Activated naive CD4-positive, alpha-beta T cell treated with anti-CD3 and anti-CD28 coated beads for 36 hours (primary cell): ENCODE measurements at regions of chr1 and their contacts with region 1.

Region 1: DNA sequence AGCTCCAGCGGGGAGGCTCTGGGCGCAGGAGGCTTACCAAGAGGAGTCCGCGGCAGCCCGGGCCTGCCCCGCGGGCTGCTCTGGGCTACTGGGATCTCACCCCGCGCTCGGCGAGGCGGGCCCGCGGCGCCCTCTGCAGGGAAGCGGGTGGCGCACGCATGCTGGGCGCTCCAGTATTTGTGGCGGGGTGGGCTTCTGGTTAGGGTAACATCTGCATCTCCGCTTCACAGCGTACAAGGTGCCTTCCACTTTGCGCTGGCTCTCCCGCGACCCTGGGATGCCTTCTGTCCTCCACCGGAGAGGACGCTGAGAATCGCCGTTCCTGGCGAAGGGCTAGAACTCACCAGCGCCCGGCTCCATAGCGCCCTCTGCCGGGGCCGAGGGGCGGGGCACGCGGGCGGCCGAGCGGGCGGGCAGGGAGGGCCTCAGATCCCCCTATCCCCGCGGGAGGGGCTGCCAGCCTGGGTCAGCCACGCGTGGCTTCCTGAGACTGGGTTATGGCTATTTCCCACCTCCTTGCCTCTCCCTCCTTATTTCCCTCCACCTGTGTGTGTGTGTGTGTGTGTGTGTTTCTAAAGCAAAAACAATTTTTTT is 46.6 kb upstream of the CTBS start:
- DNase-seq: peak; percentile 85
- H3K4me3 Mint-ChIP-seq: peak overlapping the region; percentile 93
- H3K27ac Mint-ChIP-seq: peak overlapping the region; percentile 94
- H3K4me1 Mint-ChIP-seq: peaks cover 18% of the 10 kb centered on the region
- H3K27me3 Mint-ChIP-seq: no peaks in the 10 kb centered on the region

Region 2: GRCh38 chr1:83905315-83905907 is 715.4 kb before region 1 on chr1:
- CTCF ChIA-PET with region 1: no interaction called
- intact Hi-C with region 1: loop called (anchors 10 kb)
- DNase-seq: peak; percentile 10
- H3K4me3 Mint-ChIP-seq: no peak overlapping the region
- H3K27ac Mint-ChIP-seq: no peak overlapping the region
- H3K4me1 Mint-ChIP-seq: no peaks in the 10 kb centered on the region
- H3K27me3 Mint-ChIP-seq: peaks cover 12% of the 10 kb centered on the region

Region 3: GRCh38 chr1:84298328-84298683 is 322.5 kb before region 1 on chr1:
- CTCF ChIA-PET with region 1: no interaction called
- intact Hi-C with region 1: loop called (anchors 2 kb)
- DNase-seq: peak; percentile 54
- H3K4me3 Mint-ChIP-seq: peak overlapping the region; percentile 81
- H3K27ac Mint-ChIP-seq: peak overlapping the region; percentile 28
- H3K4me1 Mint-ChIP-seq: peaks cover 35% of the 10 kb centered on the region
- H3K27me3 Mint-ChIP-seq: no peaks in the 10 kb centered on the region

Region 4: DNA sequence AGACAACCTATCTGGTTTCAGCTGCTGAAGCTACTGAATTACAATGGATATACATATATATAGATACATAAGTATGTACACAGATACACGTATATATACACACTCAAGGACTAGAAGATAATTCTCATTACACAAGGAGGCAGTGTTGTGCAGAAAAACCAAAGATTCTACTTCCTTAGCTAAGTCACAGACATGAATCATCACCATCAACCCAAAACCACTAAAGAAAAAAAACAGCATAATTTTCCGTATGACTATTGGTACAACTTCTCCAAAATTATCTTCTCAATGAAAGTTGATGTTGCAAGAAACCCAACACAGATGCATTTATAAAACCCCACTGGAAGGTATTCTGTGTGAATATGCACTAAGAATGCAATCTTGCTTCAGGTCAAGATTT is 178.6 kb before region 1 on chr1:
- CTCF ChIA-PET with region 1: interaction called, 49 read pairs
- intact Hi-C with region 1: loop called (anchors 1 kb)
- DNase-seq: no peak
- H3K4me3 Mint-ChIP-seq: no peak overlapping the region
- H3K27ac Mint-ChIP-seq: no peak overlapping the region
- H3K4me1 Mint-ChIP-seq: peaks cover 25% of the 10 kb centered on the region
- H3K27me3 Mint-ChIP-seq: no peaks in the 10 kb centered on the region

Region 5: DNA sequence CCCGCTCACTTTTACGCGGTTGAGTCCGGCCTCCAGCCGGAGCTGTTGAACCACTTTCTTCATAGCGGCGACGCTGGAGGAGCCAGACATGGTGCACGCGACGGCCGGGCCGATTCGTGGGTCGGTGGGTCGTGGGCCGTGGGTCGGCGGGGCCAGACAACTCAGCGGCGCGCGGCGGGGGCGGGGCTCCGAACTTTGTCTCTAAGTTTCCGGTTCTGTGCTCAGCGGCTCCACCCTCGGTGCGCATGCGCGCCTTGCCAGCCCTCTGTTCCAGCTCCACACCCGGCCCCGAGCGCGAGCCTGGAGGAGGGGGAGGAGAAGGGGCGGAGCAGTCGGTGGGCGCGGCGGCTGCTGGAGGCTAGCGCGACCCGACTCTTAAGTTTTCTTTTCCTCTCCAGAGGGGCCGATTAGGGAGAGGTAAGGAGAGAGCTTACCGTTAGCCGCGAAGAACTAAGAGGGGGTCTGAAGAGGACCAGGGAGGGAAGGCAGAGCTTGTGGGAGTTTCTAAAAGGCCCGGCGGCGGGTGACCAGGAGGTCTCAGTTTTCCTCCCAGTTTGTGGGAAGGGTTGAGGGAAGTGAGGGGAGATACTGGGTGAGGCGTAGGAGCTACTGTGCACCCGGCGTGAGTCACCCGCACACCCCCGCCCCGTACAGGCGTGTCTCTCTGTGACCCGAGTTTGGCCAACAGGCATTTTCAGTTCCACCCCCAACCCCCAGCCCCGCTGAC is 114.7 kb before region 1 on chr1 and contains the starts of genes GNG5 and SPATA1:
- CTCF ChIA-PET with region 1: interaction called, 6 read pairs
- intact Hi-C with region 1: loop called (anchors 1 kb)
- DNase-seq: peak; percentile 97
- H3K4me3 Mint-ChIP-seq: peak within 1 kb of the TSS; percentile 100
- H3K27ac Mint-ChIP-seq: peak within 1 kb of the TSS; percentile 98
- H3K4me1 Mint-ChIP-seq: peaks cover 27% of the 10 kb centered on the region
- H3K27me3 Mint-ChIP-seq: no peaks in the 10 kb centered on the region
- total RNA-seq, gene GNG5: 128 to 132 TPM
- total RNA-seq, gene SPATA1: 1.8 to 2.7 TPM

Region 6: DNA sequence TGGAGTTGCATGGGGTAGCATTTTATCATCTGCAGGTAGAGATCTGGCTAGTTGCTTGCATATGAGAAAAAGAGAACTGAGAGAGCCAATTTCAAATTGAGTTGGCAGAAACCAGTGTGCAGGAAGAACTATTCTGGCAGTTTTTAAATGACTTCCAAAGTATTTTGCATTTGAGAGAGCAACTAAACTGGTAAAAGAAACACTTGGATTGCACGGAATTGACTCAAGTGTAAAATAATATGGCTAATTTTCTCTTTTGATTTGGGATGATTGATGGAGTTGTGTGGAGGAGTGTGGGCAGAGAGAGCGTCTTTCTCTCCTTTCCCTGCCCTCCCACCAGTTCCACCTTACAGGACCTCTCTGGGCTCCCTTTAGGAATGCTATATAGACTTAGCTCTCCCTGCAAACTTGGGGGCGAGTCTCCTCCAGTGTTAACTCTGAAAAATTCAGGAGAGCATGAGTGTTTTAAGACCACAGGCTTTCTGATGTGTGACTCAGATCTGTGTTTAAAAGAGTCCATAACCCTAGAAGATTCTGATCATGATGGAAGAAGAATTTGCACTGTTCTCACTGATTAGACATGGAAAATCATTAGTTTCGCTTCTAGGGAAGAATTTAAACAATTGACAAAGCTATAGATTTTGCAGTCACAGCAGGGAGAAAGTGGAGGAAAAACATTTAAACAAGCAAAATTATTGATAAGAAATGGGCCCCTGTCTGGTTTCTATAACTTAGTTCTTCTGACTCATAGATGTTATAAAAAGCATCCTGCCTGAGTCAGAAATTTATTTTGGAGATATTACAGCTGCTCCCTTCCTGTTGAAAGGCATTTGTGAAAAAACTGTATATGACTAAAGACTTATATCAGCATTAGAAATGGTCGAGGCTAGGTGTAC is 21.7 kb before region 1 on chr1:
- CTCF ChIA-PET with region 1: interaction called, 3 read pairs
- intact Hi-C with region 1: loop called (anchors 1 kb)
- DNase-seq: no peak
- H3K4me3 Mint-ChIP-seq: no peak overlapping the region
- H3K27ac Mint-ChIP-seq: peak overlapping the region; percentile 70
- H3K4me1 Mint-ChIP-seq: peaks cover 31% of the 10 kb centered on the region
- H3K27me3 Mint-ChIP-seq: no peaks in the 10 kb centered on the region

Region 7: GRCh38 chr1:84772428-84772943 is 151.7 kb after region 1 on chr1:
- CTCF ChIA-PET with region 1: interaction called, 3 read pairs
- intact Hi-C with region 1: loop called (anchors 1 kb)
- DNase-seq: peak; percentile 86
- H3K4me3 Mint-ChIP-seq: no peak overlapping the region
- H3K27ac Mint-ChIP-seq: no peak overlapping the region
- H3K4me1 Mint-ChIP-seq: no peaks in the 10 kb centered on the region
- H3K27me3 Mint-ChIP-seq: no peaks in the 10 kb centered on the region